ENCODE measurements at regions of chr7 and their contacts with region 1.

Region 1: DNA sequence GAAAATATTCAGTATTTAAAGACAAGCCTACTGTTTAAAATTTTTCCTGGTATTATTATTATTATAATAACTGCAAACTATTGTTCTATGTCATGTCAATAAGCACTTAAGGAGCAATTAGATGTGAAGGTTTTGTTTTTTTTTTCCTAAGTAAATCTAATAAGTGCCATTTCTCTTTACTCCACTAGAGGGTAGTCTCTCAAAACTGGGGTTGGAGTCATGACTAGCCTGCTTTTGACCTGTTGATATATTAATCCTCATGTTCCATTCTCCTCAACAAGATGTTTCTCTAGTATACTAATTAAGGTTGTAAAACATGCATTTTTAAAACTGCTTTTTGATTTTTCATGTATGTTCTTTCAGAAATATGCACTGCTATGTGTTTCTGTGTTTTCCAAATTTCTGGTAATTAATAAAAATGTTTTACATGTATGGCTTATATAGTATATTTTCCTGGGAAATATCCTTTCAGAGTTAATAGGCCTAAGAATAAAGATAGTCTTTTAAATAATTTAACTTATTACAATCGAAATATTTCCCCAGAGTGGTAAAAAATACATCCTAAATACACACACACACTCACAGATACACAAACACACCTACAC is 1.0 kb upstream of the LRRN3 start:
- DNase-seq: no peak
- ATAC-seq: peak in 5 of 8 donors; percentile 64 to 78 (median 66)
- H3K4me3 ChIP-seq: peak overlapping the region in 1 of 10 donors; percentile 59
- H3K27ac ChIP-seq: no peak overlapping the region
- H3K4me1 ChIP-seq: peaks cover 0 to 31% (median 13%) of the 10 kb centered on the region in 9 donors
- H3K27me3 ChIP-seq: no peaks in the 10 kb centered on the region
- CTCF ChIP-seq: peak; percentile 54 to 88 (median 79)

Region 2: DNA sequence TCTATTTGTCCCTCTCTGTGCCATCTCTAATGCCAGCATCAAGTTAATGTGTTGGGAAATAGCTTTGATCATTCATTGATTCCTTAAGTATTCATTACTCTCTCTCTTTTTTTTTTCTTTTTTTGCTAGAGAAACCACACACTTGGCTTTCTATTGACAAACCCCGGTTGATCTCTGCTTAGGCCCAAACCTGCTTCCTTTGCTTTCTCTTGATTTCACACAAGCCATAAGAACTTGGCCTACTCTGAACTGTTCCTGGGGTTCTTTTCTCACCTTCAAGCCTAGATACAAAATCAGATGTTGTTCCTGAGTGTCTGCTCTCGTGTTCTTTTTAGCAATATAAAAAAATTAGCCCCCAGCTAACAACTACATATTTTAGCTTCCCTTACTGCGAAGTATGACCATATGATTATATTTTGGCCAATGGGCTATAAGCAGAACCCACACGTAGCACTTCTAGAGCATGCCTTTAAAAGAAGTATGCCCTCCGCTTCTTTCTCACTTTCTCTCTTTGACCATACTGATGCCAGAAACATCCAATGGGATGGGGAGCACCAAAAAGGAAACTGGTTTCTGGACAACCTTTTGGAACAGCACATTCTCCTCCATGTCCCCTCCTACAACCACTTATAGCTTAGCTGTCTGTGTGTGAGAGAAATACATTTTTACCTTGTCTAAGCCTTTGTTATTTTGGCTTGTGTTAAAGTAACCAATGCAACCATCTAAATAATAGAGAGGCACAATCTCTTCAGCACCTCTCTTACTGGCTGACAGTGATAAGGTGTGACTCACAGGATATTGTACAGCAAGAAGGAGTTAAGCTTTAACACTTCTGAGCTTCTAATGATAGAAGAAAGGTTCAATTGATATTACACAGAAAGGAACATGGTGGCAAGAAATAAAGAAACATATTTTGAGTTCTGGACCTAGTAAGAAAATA is 95.6 kb before region 1 on chr7:
- intact Hi-C with region 1: loop called in 1 of 10 experiments (anchors 5 kb)
- DNase-seq: no peak
- ATAC-seq: peak; percentile 58 to 98 (median 83)
- H3K4me3 ChIP-seq: no peak overlapping the region
- H3K27ac ChIP-seq: peak overlapping the region in 5 of 10 donors; percentile 6 to 47 (median 30)
- H3K4me1 ChIP-seq: peaks cover 0 to 14% (median 0%) of the 10 kb centered on the region in 9 donors
- H3K27me3 ChIP-seq: no peaks in the 10 kb centered on the region
- CTCF ChIP-seq: no peak

Region 3: DNA sequence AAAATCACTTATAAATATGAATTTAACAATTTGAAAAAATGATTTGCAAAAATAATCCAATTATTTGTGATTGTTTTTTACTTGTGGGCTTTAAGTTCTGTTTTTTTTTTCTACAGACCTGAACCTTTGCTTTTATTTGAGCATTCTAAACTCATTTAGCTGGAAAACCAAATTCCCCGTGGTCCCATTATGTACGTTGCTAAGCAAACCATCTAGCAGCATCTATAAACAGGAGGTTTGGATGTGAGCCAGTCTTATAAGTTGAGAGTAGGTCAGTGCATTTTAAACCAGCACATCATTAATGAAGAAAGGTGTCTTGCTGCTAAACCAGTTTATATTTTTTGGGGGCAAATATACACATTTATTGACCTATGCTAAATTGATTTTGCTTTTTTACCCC is 78.3 kb after region 1 on chr7:
- intact Hi-C with region 1: no loop called
- DNase-seq: no peak
- ATAC-seq: no peak
- H3K4me3 ChIP-seq: no peak overlapping the region
- H3K27ac ChIP-seq: no peak overlapping the region
- H3K4me1 ChIP-seq: peaks cover 0 to 9% (median 0%) of the 10 kb centered on the region in 9 donors
- H3K27me3 ChIP-seq: no peaks in the 10 kb centered on the region
- CTCF ChIP-seq: no peak

Region 4: GRCh38 chr7:111730476-111731300 is 640.8 kb after region 1 on chr7:
- intact Hi-C with region 1: loop called in 8 of 10 experiments (anchors 5 to 10 kb)
- DNase-seq: no peak
- ATAC-seq: peak in 3 of 8 donors; percentile 45 to 59 (median 49)
- H3K4me3 ChIP-seq: no peak overlapping the region
- H3K27ac ChIP-seq: no peak overlapping the region
- H3K4me1 ChIP-seq: peaks cover 0 to 11% (median 8%) of the 10 kb centered on the region in 9 donors
- H3K27me3 ChIP-seq: no peaks in the 10 kb centered on the region
- CTCF ChIP-seq: peak in 7 of 9 donors; percentile 30 to 55 (median 45)

Measured in heart right ventricle (tissue), 16 donors.